Right ventricle myocardium superior (tissue), 1 donor: ENCODE measurements at regions of chr19 and their contacts with region 1.

Region 1: GRCh38 chr19:40598121-40598917 is 2.9 kb upstream of the LTBP4 start:
- DNase-seq: peak; percentile 93
- ATAC-seq: peak; percentile 68

Region 2: GRCh38 chr19:40542202-40542859 is 56.0 kb before region 1 on chr19:
- intact Hi-C with region 1: loop called (anchors 5 kb)
- DNase-seq: peak; percentile 90
- ATAC-seq: peak; percentile 93